ENCODE measurements at regions of chr5 and their contacts with region 1.

Region 1: GRCh38 chr5:43543434-43543833 is 13.4 kb downstream of the PAIP1 start:
- DNase-seq: no peak

Region 2: GRCh38 chr5:43530648-43531047 is 12.8 kb before region 1 on chr5:
- CTCF ChIA-PET with region 1: interaction called, 11 read pairs
- POLR2A ChIA-PET with region 1: no interaction called
- DNase-seq: no peak

Region 3: GRCh38 chr5:43815504-43815903 is 272.1 kb after region 1 on chr5:
- CTCF ChIA-PET with region 1: no interaction called
- POLR2A ChIA-PET with region 1: no interaction called
- DNase-seq: no peak

Measured in HEK293T (cell line).